ENCODE measurements at regions of chr1 and their contacts with region 1.

Region 1: GRCh38 chr1:182175361-182175931 is 113.9 kb upstream of the ZNF648 start:
- DNase-seq: no peak

Region 2: GRCh38 chr1:180814859-180815587 is 1360.4 kb before region 1 on chr1:
- intact Hi-C with region 1: no loop called
- DNase-seq: no peak

Region 3: DNA sequence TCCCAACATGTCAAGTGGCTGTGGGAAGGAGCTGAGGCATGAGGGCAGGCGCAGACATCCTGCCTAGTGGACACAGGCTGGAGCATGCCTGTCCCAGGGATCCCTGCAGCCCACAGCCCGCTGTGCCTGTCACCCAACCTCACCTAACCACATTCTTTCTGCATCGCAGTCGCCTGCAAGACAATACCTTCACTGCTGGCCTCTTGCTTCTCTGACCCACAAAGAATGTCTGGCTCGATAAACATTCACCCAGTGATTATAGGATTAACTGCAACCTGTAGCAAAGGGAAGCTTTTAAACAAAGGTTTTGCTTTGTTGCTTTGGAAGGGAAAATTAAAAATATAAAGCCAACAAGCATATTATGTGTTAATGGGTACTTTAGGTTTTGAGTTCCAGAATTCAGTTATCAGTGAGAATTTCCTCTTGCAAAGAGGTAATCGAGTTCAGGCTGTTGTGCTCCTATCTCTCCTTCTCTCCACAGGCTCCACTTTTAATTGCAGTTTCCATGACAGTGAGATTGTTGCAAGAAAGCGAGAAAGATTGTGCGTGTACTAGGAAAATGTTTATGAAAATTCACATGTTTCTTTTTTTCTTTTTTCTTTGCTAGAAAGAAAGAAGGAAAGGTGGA is 73.9 kb before region 1 on chr1:
- intact Hi-C with region 1: loop called in 1 of 2 experiments (anchors 2 kb)
- DNase-seq: no peak

Measured in posterior vena cava (tissue), 2 donors.